Esophagus squamous epithelium (tissue), 5 donors: ENCODE measurements at regions of chr10 and their contacts with region 1.

Region 1: DNA sequence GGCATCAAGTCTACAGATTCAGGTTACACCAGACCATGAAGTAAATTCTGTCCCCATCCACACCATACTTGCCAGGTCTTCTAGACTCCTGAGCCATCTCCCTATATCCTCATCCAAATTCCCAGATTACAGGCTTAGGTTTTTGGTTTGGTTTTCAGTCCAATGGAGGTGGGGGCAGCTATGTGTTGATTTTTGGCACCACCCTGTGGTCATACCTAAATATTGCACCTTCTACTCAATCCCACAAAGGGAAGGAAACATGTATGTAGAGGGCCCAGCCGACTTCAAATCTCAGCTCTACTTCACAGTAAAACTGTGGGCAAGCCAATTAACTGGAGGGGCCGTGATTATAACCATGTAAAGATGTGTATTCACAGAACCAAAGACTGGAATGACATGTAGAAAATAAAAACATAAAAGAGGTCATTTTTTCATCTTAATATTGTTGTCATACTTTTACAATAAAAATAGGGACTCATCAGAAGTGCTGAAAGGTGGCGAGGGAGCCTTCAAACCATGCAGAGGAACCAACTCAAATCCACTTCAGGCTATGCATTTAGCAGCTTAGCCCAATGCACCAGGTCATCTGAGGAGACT is 19.8 kb downstream of the ERCC6 start:
- DNase-seq: no peak
- H3K4me3 ChIP-seq: no peak overlapping the region
- H3K27ac ChIP-seq: no peak overlapping the region
- H3K4me1 ChIP-seq: no peaks in the 10 kb centered on the region
- H3K27me3 ChIP-seq: no peaks in the 10 kb centered on the region
- CTCF ChIP-seq: peak; percentile 44 to 75 (median 58)
- POLR2A ChIP-seq: no peak

Region 2: DNA sequence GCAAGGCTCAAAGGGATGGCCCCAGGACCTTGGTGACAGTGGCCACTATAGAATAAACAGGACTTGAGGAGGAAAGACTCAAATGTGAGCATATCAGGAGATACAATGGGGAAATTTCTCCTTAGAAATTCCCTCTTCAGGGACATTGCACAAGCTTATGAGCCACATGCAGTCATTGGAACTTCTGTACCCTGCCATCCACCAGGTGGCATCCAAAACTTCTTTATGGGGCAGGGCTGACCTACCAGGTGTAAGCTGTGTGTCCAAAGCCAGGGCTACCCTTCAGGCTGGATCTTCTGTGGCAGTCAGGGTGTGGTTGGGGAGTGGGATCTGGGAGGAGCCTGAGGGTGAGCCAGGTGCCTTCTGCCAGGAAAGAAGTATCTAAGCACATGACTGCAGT is 542.9 kb before region 1 on chr10:
- intact Hi-C with region 1: loop called (anchors 10 kb)
- DNase-seq: no peak
- H3K4me3 ChIP-seq: no peak overlapping the region
- H3K27ac ChIP-seq: no peak overlapping the region
- H3K4me1 ChIP-seq: peaks cover 0 to 4% (median 0%) of the 10 kb centered on the region in 3 donors
- H3K27me3 ChIP-seq: peaks cover 0 to 8% (median 0%) of the 10 kb centered on the region in 4 donors
- CTCF ChIP-seq: peak in 4 of 6 experiments; percentile 18 to 46 (median 30)
- POLR2A ChIP-seq: no peak

Region 3: DNA sequence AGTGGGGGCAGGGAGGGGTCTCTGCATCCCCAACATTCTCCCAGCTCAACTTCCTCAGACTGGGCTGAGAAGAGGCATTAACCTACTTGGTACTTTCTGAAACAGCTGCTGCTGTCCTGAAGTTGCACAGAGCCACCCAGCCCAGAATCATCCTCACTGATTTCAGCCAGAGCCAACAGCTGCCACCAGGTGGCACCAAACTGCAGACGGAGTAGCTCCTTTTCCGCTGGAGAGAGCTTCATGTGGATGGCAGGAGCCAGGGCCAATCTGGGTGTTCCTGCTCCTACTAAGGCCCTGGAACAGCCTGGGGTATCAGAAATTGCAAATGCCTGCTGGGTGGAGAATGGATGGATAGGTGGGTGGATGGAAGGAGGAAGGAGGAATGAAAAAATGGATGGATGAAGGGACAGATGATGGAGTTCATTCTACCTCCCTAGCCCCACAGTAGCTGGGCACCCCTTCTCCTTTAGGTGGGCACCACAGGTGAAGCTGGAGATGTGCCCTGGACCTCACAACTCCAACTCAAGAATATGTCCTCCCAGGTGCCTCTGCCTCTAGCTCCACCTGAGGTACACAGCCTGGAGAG is 111.4 kb before region 1 on chr10:
- intact Hi-C with region 1: loop called (anchors 5 kb)
- DNase-seq: no peak
- H3K4me3 ChIP-seq: no peak overlapping the region
- H3K27ac ChIP-seq: no peak overlapping the region
- H3K4me1 ChIP-seq: peaks cover 0 to 11% (median 0%) of the 10 kb centered on the region in 3 donors
- H3K27me3 ChIP-seq: peaks cover 0 to 54% (median 0%) of the 10 kb centered on the region in 4 donors
- CTCF ChIP-seq: peak; percentile 64 to 94 (median 84)
- POLR2A ChIP-seq: no peak

Region 4: DNA sequence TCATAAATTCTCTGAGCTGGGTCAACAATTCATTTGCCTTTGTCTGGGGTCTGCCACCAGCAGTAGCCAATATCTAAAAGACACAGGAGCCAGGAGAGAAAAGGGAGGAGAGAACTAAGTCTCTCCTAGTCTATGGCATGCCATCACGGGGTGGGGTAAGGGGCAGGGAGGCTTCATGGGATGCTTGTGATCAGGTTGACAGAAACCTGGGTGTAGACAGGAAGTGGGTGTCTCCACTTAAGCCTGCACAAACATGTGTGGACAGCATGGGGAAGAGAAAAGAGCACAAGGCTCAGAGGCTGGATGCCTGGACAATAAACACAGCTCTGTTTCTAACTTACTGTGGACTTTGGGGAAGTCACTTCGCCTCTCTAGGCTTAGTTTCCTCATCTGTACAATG is 148.9 kb after region 1 on chr10:
- intact Hi-C with region 1: no loop called
- DNase-seq: no peak
- H3K4me3 ChIP-seq: no peak overlapping the region
- H3K27ac ChIP-seq: no peak overlapping the region
- H3K4me1 ChIP-seq: no peaks in the 10 kb centered on the region
- H3K27me3 ChIP-seq: peaks cover 0 to 14% (median 0%) of the 10 kb centered on the region in 4 donors
- CTCF ChIP-seq: no peak
- POLR2A ChIP-seq: no peak